Activated T-helper 1 cell treated with anti-CD3 and anti-CD28 coated beads, Interleukin-12 subunit alpha, Interleukin-12 subunit beta, Interleukin-2, Interleukin-4 antibody, amounts not matched to agents 30 ng/mL and 10 ng/mL and 1 ng/mL, durations not matched to agents 14 hours and 24 hours and 36 hours (primary cell): ENCODE measurements at regions of chr7 and their contacts with region 1.

Region 1: DNA sequence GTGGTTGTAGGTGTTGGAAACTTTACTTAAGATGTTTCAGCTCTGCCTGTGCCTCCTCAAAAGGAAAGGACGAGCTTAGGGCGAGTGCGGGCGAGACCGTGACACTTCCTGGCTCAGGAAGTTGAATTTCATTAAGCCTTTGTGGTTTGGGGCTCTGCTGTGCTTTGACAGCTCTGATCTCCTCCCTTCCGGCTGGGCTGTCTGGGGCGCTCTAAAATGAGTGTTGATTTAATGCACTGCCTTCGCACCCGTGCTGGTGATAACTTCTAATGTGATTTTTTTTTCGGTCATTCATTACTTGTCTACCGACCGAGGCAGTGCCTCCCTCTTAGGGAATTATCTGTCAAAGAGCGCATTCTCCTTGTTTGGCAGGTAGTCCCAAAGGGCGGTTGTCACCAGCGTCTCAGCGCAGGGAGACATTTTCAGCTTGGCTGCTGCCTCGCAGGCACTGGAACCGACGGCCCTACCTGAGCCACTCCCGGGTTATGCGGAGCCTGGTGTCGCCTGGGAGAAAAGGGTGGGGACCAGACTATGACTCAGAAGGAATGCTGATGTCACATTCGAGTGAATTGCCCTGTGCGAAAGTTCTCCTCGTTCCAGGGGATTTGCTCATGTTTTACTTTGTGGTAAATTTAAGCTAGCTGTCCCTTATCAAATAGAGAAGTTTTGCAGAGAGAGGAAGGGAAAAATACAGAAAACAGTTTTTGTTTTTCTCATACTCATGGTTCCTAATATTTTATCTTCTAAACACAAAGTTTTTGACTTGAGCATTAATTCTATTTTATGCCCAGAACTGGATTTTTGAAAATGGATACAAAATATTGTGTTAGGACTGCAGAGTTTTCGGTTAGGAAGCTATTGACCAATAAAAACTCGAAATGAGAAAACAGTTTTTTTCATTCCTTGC is 920 bp downstream of the TES start:
- DNase-seq: peak; percentile 68
- H3K4me3 Mint-ChIP-seq: peak overlapping the region; percentile 95
- H3K27ac Mint-ChIP-seq: peak overlapping the region; percentile 91
- H3K4me1 Mint-ChIP-seq: peaks cover 52% of the 10 kb centered on the region
- H3K27me3 Mint-ChIP-seq: peaks cover 2% of the 10 kb centered on the region

Region 2: GRCh38 chr7:114789871-114790311 is 1421.4 kb before region 1 on chr7:
- intact Hi-C with region 1: loop called (anchors 10 kb)
- DNase-seq: no peak
- H3K4me3 Mint-ChIP-seq: no peak overlapping the region
- H3K27ac Mint-ChIP-seq: peak overlapping the region; percentile 65
- H3K4me1 Mint-ChIP-seq: peaks cover 42% of the 10 kb centered on the region
- H3K27me3 Mint-ChIP-seq: no peaks in the 10 kb centered on the region

Region 3: DNA sequence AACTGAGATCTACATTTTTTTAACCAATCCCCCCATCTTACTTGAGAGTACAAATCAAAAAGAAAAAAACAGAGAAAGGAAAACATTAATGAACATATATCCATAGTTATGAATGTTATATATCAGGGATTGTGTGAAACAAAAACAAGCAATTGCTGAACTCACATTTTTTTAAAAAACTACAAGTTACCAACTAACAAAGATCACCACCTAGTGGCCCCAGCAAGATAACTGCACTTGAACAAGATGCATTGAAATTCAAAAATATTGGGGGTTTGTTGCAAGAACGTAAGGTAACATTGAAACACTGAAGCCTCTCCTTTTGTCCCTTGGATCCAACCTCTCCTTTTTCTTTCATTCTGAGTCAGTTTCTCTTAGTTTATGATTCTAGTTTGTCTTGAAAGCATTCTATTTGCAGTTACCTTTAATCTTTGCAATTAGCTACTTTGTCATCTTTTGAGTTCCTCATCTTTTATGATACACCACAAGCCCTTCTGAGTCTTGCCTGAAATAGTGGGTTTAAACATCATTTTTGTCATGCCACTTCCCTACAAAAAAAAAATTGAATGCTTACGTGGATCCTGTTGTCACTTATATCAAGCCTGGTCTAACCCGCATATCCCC is 88.2 kb before region 1 on chr7:
- intact Hi-C with region 1: no loop called
- DNase-seq: no peak
- H3K4me3 Mint-ChIP-seq: no peak overlapping the region
- H3K27ac Mint-ChIP-seq: no peak overlapping the region
- H3K4me1 Mint-ChIP-seq: no peaks in the 10 kb centered on the region
- H3K27me3 Mint-ChIP-seq: peaks cover 18% of the 10 kb centered on the region

Region 4: GRCh38 chr7:116138202-116138801 is 73.0 kb before region 1 on chr7:
- intact Hi-C with region 1: loop called (anchors 2 kb)
- DNase-seq: peak; percentile 16
- H3K4me3 Mint-ChIP-seq: no peak overlapping the region
- H3K27ac Mint-ChIP-seq: no peak overlapping the region
- H3K4me1 Mint-ChIP-seq: peaks cover 20% of the 10 kb centered on the region
- H3K27me3 Mint-ChIP-seq: peaks cover 9% of the 10 kb centered on the region

Region 5: GRCh38 chr7:116165717-116166116 is 45.5 kb before region 1 on chr7:
- intact Hi-C with region 1: no loop called
- DNase-seq: no peak
- H3K4me3 Mint-ChIP-seq: no peak overlapping the region
- H3K27ac Mint-ChIP-seq: no peak overlapping the region
- H3K4me1 Mint-ChIP-seq: peaks cover 6% of the 10 kb centered on the region
- H3K27me3 Mint-ChIP-seq: peaks cover 12% of the 10 kb centered on the region

Region 6: DNA sequence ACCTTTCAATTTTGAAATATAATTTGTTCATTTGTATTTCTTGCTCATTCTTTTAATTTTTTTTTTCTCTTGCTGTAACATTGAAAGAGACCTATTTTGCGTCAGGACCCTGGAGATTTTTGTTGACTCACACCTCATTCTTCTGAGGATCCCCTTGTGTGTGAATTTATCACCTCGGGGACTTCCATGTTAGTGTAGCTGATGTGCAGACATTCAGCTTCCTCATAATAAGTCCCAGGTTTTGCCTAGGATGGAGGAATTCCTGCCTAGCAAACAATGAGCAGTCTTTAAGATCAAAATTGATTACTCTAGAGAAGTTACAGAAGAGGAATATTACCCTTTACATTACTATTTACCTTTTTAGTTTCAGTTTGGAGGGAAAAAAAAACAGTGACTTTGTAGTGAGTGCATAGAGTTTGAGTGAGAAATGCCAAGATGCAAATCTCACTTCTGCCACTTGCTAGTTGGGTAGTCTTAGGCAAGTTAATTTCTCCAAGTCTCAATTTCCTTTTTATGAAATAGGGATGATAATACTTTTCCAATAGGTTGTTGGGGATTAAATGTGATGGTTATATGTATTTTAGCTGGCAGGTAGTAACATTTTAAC is 13.3 kb after region 1 on chr7:
- intact Hi-C with region 1: loop called (anchors 1 kb)
- DNase-seq: no peak
- H3K4me3 Mint-ChIP-seq: peak overlapping the region; percentile 53
- H3K27ac Mint-ChIP-seq: no peak overlapping the region
- H3K4me1 Mint-ChIP-seq: peaks cover 53% of the 10 kb centered on the region
- H3K27me3 Mint-ChIP-seq: no peaks in the 10 kb centered on the region

Region 7: GRCh38 chr7:116298055-116298454 is 86.8 kb after region 1 on chr7:
- intact Hi-C with region 1: no loop called
- DNase-seq: no peak
- H3K4me3 Mint-ChIP-seq: no peak overlapping the region
- H3K27ac Mint-ChIP-seq: no peak overlapping the region
- H3K4me1 Mint-ChIP-seq: no peaks in the 10 kb centered on the region
- H3K27me3 Mint-ChIP-seq: peaks cover 9% of the 10 kb centered on the region

Region 8: DNA sequence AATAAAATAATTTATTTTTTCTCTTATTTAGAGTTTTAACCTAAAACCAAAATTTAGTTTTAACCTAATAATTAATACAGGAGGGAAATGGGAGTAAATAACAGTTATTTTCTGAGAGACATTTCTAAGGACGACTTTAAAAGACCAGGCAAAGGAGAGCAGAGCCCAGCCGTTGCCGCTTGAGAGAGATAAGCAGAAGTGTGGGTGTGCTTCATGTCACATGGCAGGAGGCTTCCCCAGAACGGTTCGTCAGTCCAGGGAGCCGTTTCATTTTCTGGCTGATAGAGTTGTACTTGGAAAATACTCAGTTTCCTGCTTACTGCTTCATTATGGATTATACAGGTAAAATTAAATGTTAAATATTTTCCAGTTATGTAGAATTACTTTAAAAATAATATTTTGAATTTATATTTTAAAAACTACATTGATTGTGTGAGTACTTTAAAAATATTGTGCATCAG is 803.4 kb after region 1 on chr7:
- intact Hi-C with region 1: loop called (anchors 10 kb)
- DNase-seq: no peak
- H3K4me3 Mint-ChIP-seq: no peak overlapping the region
- H3K27ac Mint-ChIP-seq: no peak overlapping the region
- H3K4me1 Mint-ChIP-seq: peaks cover 40% of the 10 kb centered on the region
- H3K27me3 Mint-ChIP-seq: peaks cover 25% of the 10 kb centered on the region